ENCODE measurements at regions of chr1 and their contacts with region 1.

Region 1: DNA sequence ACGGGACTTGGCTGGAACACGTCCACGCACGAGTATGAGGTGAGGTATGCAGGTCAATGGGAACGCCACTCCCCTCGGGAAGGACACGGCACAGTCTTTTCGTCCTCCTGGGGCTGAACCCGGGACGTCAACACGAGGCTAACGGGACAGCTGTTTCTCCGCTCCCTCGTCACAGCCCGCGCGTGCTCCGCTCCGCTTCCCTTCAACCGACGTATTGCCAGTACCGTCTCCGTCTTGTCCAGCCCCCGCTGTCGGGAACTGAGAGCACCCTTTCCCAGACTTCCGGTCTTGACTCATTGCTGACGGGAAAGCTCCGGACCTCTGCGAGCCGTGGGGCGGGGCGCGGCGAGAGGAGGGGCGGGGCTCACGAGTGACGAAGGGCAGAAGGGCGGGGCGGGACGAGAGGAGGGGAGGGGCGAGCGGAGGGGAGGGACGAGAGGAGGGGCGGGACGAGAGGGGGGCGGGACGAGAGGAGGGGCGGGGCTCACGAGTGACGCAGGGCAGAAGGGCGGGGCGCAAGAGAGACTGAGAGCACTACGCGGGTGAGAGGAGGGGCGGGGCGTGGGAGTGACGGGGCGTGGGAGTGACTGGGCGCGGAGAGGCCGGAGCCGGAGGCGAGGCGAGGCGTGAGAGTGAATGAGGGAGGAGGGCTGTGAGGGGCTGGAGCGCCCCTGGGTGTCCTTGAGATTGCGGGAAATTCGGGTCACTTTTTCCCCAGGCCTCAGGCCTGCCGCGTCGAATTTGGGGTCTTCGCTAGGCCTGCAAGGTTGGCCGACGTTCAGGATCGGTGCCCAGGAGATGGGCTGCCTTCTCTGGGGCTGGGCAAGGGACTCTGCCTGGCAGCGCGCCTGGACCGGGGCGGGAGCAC is 22.2 kb upstream of the CFAP126 start:
- DNase-seq: peak; percentile 93 to 98
- ATAC-seq: peak; percentile 97
- H3K4me3 ChIP-seq: peak overlapping the region; percentile 72
- H3K27ac ChIP-seq: peak overlapping the region; percentile 95 to 98
- H3K4me1 ChIP-seq: peaks cover 8% of the 10 kb centered on the region; the same call in 1 of the 3 replicates
- CTCF ChIP-seq: no peak
- EP300 ChIP-seq: no peak
- POLR2A ChIP-seq: peak; percentile 97
- RAD21 ChIP-seq: no peak

Region 2: DNA sequence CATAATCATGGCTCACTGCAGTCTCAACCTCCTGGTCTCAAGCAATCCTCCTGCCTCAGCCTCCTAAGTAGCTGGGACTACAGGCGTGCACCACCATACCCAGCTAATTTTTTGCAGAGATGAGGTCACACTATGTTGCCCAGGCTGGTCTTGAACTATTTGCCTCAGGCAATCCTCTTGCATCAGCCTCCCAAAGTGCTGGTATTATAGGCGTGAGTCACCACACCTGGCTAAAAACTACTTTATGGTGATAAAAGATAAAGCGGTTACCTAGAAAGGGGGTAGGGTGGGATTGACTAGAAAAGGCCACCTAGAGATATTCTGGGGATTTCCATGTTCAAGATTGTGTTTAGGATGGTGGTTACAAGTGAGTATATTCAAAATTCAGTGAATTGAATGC is 356.2 kb before region 1 on chr1:
- CTCF ChIA-PET with region 1: no interaction called
- POLR2A ChIA-PET with region 1: no interaction called
- DNase-seq: no peak
- ATAC-seq: no peak
- H3K4me3 ChIP-seq: no peak overlapping the region
- H3K27ac ChIP-seq: no peak overlapping the region
- H3K4me1 ChIP-seq: no peaks in the 10 kb centered on the region
- CTCF ChIP-seq: no peak
- EP300 ChIP-seq: no peak
- POLR2A ChIP-seq: no peak
- RAD21 ChIP-seq: no peak

Region 3: GRCh38 chr1:161201828-161202725 is 187.8 kb before region 1 on chr1 and contains the start of gene NDUFS2:
- CTCF ChIA-PET with region 1: interaction called, 200 read pairs
- POLR2A ChIA-PET with region 1: interaction called, 19 read pairs
- DNase-seq: peak; percentile 94 to 99
- ATAC-seq: peak; percentile 95 to 98
- H3K4me3 ChIP-seq: peak within 1 kb of the TSS; percentile 84
- H3K27ac ChIP-seq: peak within 1 kb of the TSS; percentile 93
- H3K4me1 ChIP-seq: peaks cover 29% of the 10 kb centered on the region
- CTCF ChIP-seq: peak; percentile 34
- EP300 ChIP-seq: no peak
- POLR2A ChIP-seq: peak; percentile 84
- RAD21 ChIP-seq: no peak
- polyA plus RNA-seq, gene NDUFS2: 125 and 144 TPM in 2 replicates

Region 4: GRCh38 chr1:161342821-161343220 is 47.1 kb before region 1 on chr1:
- CTCF ChIA-PET with region 1: no interaction called
- POLR2A ChIA-PET with region 1: no interaction called
- DNase-seq: no peak
- ATAC-seq: no peak
- H3K4me3 ChIP-seq: no peak overlapping the region
- H3K27ac ChIP-seq: no peak overlapping the region
- H3K4me1 ChIP-seq: no peaks in the 10 kb centered on the region
- CTCF ChIP-seq: no peak
- EP300 ChIP-seq: no peak
- POLR2A ChIP-seq: no peak
- RAD21 ChIP-seq: no peak

Measured in A549 (cell line).